Cardiac septum (tissue), 1 donor: ENCODE measurements at regions of chr3 and their contacts with region 1.

Region 1: DNA sequence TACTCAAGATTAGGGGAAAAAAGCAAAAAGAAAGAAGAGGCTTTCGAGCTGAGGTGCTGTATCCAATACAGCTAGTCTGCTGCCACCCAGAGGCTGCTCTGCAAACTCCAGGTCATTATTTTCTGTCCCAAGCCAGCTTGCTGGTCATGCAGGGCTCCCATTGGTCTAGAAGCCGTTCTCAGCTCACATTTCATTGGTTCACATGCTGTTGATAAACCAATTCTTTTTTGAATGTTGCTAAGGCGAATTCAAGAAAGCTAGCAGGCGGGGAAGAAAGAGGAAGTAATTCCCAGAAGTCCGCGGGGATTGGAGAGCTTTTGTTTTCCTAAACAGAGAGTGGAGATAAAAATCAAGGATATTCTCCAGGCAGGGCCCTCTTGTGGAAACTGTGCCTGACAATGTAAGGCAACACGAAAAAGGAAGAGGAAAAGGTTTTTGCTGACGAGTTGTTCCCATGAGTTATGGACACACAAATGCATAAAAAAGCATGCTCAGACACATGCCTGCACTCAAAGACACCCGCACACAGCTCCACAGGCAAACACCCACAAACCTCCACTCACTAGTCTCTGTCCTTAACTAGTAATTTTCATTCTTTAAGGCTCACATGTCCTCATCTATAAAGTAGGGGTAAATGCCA is 33.4 kb downstream of the FSTL1 start:
- DNase-seq: peak; percentile 94

Region 2: GRCh38 chr3:119891944-119892721 is 525.3 kb before region 1 on chr3:
- intact Hi-C with region 1: loop called (anchors 5 kb)
- DNase-seq: no peak

Region 3: GRCh38 chr3:120245386-120245785 is 172.0 kb before region 1 on chr3:
- intact Hi-C with region 1: loop called (anchors 2 kb)
- DNase-seq: no peak

Region 4: DNA sequence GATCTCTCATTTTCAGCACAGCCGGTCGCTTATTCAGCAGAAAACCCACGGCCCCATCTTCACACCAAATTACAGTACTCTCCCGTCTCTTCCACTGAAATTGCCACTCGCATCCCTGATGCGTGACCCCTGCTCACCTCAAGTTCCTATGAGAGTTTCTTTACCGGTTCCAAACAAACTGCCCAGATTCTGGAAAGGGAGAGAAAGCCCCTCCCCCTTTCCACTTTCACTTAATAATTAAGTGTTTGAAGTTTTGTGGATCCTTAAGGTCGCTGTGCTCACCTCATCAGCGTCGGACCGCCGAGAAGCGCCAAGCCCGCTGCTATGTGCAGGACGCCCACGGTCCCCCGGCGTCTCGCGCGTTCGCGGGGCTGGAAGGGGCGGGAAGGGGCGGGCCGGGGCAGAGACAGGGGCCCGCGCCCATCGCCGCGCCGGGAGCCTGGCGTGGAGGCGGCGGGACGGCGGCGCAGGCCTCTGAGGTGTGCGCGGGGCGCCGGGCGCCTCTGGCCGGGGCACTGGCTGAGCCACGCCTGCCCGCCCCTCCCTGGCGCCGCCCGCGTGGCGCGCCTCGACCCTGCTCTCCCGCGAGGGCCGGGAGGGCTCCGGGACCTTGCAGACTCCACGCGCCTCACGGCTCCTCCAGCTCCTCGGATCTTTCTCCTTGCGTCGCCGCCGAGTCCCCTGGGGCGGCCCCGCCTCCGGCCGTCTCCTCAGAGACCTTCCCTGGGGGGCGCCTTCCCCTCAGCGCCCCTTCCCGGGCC is 132.5 kb before region 1 on chr3 and contains the start of gene GPR156:
- intact Hi-C with region 1: no loop called
- DNase-seq: no peak
- total RNA-seq, gene GPR156: 0.11 TPM

Region 5: DNA sequence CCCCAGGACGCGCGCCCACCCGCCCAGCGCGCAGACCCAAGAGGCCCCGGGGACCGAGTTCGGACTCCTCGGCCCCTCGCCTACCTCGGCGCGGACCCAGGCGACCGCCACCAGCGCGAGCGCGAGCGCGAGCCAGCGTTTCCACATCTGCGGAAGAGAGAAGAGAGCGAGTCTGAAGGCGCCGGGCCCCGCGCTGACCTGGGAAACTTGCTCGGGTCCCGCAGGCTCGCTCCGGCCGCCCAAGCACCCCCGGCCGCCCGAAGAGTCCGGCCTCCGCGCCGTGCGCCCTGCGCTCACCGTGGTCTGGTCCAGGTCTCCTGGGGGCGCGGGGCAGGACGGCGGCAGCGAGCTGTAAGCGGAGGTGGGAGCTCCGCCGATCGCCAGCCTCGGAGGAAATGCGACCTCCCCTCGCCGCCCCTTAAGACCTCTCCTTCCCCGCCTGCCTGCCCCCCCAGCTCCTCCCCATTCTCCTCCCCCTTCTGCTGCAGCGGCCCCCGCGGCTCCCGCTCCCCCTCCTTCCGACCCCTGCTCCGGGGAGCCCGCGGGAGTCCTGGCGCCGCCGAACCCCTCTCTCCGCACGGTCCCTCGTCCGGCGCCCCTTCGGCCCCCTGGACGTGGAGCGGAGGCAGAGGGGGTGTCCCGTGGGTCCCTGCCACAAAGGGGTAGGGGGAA is 33.3 kb after region 1 on chr3 and contains the start of gene FSTL1:
- intact Hi-C with region 1: loop called (anchors 2 kb)
- DNase-seq: peak; percentile 82
- total RNA-seq, gene FSTL1: 140 TPM

Region 6: GRCh38 chr3:120477781-120478180 is 60.4 kb after region 1 on chr3:
- intact Hi-C with region 1: no loop called
- DNase-seq: no peak

Region 7: GRCh38 chr3:120506828-120507774 is 89.7 kb after region 1 on chr3:
- intact Hi-C with region 1: loop called (anchors 2 kb)
- DNase-seq: no peak

Region 8: DNA sequence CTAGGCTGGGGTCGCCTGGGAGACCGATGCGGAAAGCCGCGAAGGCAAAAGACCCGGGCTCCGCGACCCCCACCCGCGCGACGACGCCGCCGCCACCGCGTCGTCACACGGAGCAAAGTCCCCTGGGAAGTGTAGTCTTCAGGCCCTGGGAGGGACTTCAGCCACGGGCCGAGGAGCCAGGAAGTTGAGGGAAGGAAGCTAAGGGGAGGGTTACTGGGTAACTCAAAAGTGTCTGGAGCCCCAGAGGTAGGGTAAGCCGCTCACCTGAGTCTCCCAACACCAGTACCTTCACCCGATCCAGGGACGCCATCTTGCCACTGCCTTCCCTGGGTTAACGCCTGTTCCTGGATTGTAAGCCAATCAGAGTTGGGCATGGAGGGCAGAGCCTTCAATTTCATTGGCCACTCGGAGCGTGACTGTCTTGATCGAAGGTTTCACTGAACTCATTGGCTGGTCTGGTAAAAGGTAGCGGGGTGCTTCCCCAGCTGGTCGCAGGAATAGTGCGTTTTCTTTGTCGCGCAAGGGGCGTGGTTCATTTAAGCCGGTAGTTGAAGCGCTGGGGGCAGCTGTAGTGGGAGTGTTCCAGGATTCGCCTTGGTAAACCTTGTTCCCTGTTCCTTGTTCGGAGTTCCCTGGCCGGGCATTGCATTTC is 324.9 kb after region 1 on chr3 and contains the starts of genes GTF2E1 and RABL3:
- intact Hi-C with region 1: loop called (anchors 2 kb)
- DNase-seq: peak; percentile 98
- total RNA-seq, gene GTF2E1: 13.2 TPM
- total RNA-seq, gene RABL3: 22.8 TPM